Mammary epithelial cell (primary cell): ENCODE measurements at regions of chr7 and their contacts with region 1.

Region 1: DNA sequence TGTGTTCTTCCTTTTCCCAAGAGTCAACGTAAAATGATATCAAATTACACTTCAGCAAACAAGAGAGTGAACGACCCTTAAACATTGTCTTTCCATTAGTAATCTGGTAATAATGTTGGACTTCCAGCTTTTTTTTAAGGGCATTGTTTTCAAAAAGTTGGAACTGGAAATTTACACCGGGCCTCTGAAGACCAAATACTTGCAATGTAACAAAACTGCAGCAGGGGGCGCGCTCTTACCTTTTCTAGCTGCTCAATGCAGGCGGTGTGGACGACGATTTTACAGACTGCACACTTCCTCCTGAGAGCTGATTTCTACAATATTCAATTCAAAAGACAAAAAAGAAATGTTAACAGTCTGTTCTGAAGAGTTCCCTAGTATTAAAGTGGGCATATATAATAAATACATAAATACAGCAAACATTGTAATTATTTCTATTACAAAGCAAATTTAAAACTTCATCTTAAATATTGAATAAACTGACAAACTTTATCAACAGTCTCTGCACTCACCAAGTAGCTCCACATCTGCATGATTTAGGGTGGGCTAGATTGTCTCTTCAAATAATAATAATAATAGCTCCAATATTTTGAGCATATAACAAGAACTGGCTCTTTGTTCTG is 190.4 kb downstream of the DGKI start:
- DNase-seq: peak; percentile 44
- H3K4me3 ChIP-seq: no peak overlapping the region
- H3K27ac ChIP-seq: no peak overlapping the region
- H3K4me1 ChIP-seq: no peaks in the 10 kb centered on the region
- H3K27me3 ChIP-seq: no peaks in the 10 kb centered on the region
- CTCF ChIP-seq: peak; percentile 79 to 87

Region 2: DNA sequence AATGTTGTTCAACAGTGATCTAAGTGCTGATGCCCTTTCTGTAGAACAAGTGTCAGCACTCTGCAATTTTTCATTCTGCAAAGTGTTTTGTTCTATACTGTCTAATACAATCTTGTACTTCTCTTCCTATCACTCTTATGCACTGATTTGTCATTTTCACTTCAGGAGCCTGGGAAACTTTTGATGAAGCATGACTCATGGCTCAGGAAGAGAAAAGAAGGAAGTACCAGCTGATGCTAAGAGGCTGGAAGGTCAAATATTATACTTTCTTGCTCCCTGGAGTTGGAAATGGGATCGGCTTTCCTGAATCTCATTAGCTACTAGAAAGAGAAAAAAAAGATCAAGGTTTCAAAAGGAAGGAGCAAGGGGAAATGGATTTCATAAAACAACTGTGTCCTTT is 144.7 kb after region 1 on chr7:
- CTCF ChIA-PET with region 1: no interaction called
- dilution Hi-C with region 1: no loop called
- in situ Hi-C with region 1: no loop called
- intact Hi-C with region 1: loop called (anchors 5 kb)
- DNase-seq: peak; percentile 39
- H3K4me3 ChIP-seq: no peak overlapping the region
- H3K27ac ChIP-seq: no peak overlapping the region
- H3K4me1 ChIP-seq: no peaks in the 10 kb centered on the region
- H3K27me3 ChIP-seq: no peaks in the 10 kb centered on the region
- CTCF ChIP-seq: no peak

Region 3: GRCh38 chr7:137816696-137817320 is 160.5 kb after region 1 on chr7:
- CTCF ChIA-PET with region 1: interaction called, 3 read pairs
- dilution Hi-C with region 1: no loop called
- in situ Hi-C with region 1: no loop called
- intact Hi-C with region 1: loop called (anchors 2 kb)
- DNase-seq: no peak
- H3K4me3 ChIP-seq: no peak overlapping the region
- H3K27ac ChIP-seq: no peak overlapping the region
- H3K4me1 ChIP-seq: no peaks in the 10 kb centered on the region
- H3K27me3 ChIP-seq: no peaks in the 10 kb centered on the region
- CTCF ChIP-seq: peak in 1 of 2 donors; percentile 58

Region 4: DNA sequence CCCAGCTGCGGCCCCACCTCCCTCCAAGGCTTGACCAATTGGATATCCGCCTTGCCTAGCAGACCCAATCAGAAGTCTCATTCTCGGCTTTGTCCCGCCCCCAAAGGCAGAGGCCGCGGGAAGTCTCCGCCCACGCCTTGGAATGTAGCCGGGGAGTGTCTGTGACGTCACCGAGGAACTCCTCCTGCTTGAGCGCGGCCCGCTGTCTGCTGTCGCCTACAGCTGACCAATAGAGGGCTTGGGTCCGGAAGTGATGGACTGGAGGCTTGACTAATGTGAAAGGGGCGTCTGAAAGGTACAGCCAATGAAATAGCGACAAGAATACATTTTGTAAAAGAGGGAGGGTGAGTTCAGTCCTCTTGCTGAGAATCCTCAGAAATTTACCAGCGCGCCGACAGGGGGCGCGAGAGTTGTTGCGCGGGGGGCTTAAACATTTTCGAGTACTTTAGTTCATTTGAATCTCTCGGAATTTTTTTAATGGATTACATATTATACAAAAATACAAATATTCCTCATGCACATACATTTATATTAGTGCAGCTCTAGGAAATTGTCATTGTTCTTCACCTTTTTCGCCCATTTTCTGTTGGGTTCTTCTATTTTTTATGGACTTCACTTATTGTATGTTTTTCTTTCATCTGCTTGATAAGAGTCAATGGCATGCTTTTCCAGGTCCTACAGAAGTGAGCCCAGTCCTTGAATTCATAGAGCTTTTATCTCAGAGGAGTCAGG is 345.9 kb after region 1 on chr7:
- CTCF ChIA-PET with region 1: no interaction called
- dilution Hi-C with region 1: no loop called
- in situ Hi-C with region 1: loop called in 1 of 2 experiments (anchors 10 kb)
- intact Hi-C with region 1: no loop called
- DNase-seq: peak; percentile 100
- H3K4me3 ChIP-seq: peak overlapping the region; percentile 91 to 98 (median 94)
- H3K27ac ChIP-seq: peak overlapping the region; percentile 87
- H3K4me1 ChIP-seq: peaks cover 25% of the 10 kb centered on the region
- H3K27me3 ChIP-seq: no peaks in the 10 kb centered on the region
- CTCF ChIP-seq: peak; percentile 79 to 81

Region 5: DNA sequence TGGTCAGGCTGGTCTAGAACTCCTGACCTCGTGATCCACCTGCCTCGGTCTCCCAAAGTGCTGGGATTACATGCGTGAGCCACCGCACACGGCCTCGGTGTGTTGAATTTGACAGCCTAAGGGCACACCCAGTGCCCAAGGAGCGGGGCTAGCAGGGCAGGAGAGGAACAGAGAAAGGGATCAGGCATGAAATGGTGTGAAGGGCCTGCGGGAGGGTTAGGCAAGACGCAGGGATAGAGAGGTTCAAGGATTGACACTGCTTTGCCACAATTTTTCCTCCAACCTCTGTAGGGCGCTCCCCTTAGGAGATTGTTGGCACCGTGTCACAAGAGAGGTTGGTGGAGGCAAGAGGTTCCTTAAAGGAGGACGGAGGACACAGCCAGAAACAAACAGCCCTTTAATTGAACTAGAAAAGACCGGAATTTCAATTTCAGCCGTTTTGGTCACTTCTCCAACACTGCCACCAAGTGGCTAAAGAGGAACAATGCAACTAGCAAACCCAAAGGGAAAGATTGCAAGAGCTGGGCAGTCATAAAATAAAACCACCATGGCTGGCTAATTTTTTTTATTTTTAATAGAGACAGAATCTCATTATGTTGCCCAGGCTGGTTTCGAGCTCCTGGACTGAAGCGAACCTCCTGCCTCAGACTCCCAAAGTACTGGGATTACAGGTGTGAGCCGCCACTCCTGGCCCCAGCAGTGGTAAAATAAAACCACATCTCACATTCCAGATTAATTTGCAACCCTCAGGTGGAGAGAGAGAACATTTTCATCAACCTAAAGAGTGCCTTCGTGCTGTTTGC is 352.4 kb after region 1 on chr7:
- CTCF ChIA-PET with region 1: no interaction called
- dilution Hi-C with region 1: no loop called
- in situ Hi-C with region 1: loop called (anchors 10 kb)
- intact Hi-C with region 1: loop called (anchors 1 kb)
- DNase-seq: peak; percentile 53
- H3K4me3 ChIP-seq: no peak overlapping the region
- H3K27ac ChIP-seq: no peak overlapping the region
- H3K4me1 ChIP-seq: no peaks in the 10 kb centered on the region
- H3K27me3 ChIP-seq: no peaks in the 10 kb centered on the region
- CTCF ChIP-seq: peak; percentile 69 to 86

Region 6: DNA sequence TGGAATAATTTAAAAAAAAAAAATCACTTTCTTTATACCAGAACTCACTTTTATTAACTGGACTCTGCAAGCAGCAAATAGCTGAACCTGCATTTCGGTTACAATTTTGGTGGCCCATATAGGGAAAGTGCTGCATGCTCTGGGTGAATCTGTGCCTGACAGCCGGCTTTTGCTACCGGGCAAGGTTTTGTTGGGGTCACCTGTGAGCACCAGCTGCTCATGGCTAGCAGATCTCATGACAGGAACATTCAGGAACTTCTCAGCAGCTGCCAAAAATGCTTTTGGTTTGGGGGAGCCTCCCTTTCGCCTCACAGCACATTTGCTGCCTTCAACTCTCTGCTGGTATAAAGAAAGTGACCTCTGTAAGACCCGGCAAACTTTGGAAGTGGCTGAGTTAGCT is 358.8 kb after region 1 on chr7:
- CTCF ChIA-PET with region 1: no interaction called
- dilution Hi-C with region 1: no loop called
- in situ Hi-C with region 1: loop called in 1 of 2 experiments (anchors 10 kb)
- intact Hi-C with region 1: no loop called
- DNase-seq: no peak
- H3K4me3 ChIP-seq: no peak overlapping the region
- H3K27ac ChIP-seq: no peak overlapping the region
- H3K4me1 ChIP-seq: no peaks in the 10 kb centered on the region
- H3K27me3 ChIP-seq: no peaks in the 10 kb centered on the region
- CTCF ChIP-seq: no peak